ENCODE measurements at regions of chr15 and their contacts with region 1.

Region 1: DNA sequence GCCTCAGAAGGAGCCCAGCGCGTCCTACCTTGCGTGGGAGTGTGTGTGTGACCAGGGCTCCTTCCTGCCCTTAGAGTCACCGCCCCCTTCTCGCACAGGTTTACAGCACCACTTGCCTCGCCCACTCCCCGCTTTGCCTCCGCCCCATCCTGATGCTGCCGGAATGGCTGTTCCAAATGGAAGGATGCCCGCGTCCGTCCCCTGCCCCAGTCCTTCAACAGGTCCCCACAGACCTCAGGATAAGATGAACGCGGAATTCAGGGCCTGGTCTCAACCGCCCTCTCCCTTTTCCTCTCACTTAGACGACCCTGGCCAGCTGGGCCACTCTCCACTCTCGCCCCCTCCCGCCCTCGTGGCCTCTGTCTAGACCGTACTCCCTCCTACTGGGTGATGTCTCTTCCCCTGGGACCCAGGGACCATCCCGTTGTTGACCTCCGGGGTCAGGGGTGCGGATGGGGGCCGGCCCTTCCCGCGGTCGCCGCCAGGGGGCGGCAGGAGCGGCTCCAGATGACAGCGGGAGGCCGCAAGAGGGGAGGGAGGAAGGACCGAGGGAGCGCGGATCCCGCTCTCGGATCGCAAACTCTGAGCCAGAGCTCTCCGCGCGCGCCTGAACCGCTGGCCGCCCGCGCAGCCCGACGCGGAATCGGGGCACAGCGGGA is at the start of gene THSD4:
- DNase-seq: peak; percentile 86
- ATAC-seq: peak; percentile 67
- total RNA-seq, gene THSD4: 75.6 TPM

Region 2: GRCh38 chr15:71329497-71330260 is 214.7 kb after region 1 on chr15:
- intact Hi-C with region 1: loop called (anchors 10 kb)
- DNase-seq: no peak
- ATAC-seq: peak; percentile 65

Region 3: GRCh38 chr15:71437404-71438318 is 322.6 kb after region 1 on chr15:
- intact Hi-C with region 1: loop called (anchors 2 kb)
- DNase-seq: no peak
- ATAC-seq: no peak

Measured in Right ventricle myocardium superior (tissue), 1 donor.